ENCODE measurements at regions of chr1 and their contacts with region 1.

Region 1: DNA sequence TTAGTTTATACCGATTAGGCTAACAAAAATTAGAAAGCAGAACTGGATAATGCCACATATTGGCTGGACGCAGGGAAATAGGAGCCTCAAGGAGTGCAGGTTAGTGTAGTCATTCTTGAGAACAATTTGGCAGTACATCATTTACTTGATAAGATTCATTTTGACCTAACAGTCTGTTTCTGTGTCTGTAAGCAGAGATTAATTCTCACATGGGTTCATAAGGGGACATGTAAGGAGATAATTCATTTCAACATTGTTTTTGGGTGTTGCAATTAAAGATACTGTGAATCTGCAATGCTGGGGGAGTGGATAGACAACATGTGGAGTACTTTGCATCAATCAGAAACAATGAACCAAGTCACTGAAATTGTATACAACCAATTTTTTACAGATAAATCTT is 32.0 kb downstream of the AGO3 start:
- DNase-seq: no peak
- ATAC-seq: no peak
- H3K4me3 ChIP-seq: no peak overlapping the region
- H3K27ac ChIP-seq: no peak overlapping the region
- H3K4me1 ChIP-seq: no peaks in the 10 kb centered on the region
- H3K27me3 ChIP-seq: no peaks in the 10 kb centered on the region
- CTCF ChIP-seq: no peak

Region 2: GRCh38 chr1:35715568-35716002 is 247.4 kb before region 1 on chr1:
- intact Hi-C with region 1: no loop called
- DNase-seq: peak; percentile 58 to 63
- ATAC-seq: peak; percentile 30 to 64 (median 53)
- H3K4me3 ChIP-seq: no peak overlapping the region
- H3K27ac ChIP-seq: no peak overlapping the region
- H3K4me1 ChIP-seq: peaks cover 4 to 41% (median 32%) of the 10 kb centered on the region in 9 donors
- H3K27me3 ChIP-seq: no peaks in the 10 kb centered on the region
- CTCF ChIP-seq: peak; percentile 66 to 92 (median 85)

Region 3: GRCh38 chr1:36040238-36040637 is 77.3 kb after region 1 on chr1:
- intact Hi-C with region 1: no loop called
- DNase-seq: no peak
- ATAC-seq: no peak
- H3K4me3 ChIP-seq: no peak overlapping the region
- H3K27ac ChIP-seq: no peak overlapping the region
- H3K4me1 ChIP-seq: peaks cover 0 to 4% (median 0%) of the 10 kb centered on the region in 9 donors
- H3K27me3 ChIP-seq: no peaks in the 10 kb centered on the region
- CTCF ChIP-seq: no peak

Region 4: DNA sequence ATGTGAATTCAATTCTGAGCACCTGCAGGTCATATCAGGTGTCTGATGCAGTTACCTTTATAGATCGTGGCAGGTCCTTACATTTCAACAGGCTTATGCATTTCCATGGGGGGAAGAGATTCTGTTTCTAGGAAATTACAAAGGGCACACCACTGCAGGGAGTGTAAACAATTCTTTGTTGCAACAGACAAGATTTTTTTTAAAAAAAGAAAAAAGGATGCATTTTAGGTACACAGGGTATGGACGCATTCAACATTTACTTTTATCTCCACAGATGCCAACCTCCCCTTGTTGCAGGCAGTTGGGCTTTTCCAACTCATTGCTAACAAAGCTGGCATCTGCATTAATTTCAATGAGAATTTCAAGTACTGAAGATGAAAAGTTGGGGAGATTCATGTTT is 107.4 kb after region 1 on chr1:
- intact Hi-C with region 1: loop called in 1 of 10 experiments (anchors 5 kb)
- DNase-seq: no peak
- ATAC-seq: no peak
- H3K4me3 ChIP-seq: no peak overlapping the region
- H3K27ac ChIP-seq: no peak overlapping the region
- H3K4me1 ChIP-seq: peaks cover 0 to 4% (median 0%) of the 10 kb centered on the region in 9 donors
- H3K27me3 ChIP-seq: no peaks in the 10 kb centered on the region
- CTCF ChIP-seq: no peak

Region 5: DNA sequence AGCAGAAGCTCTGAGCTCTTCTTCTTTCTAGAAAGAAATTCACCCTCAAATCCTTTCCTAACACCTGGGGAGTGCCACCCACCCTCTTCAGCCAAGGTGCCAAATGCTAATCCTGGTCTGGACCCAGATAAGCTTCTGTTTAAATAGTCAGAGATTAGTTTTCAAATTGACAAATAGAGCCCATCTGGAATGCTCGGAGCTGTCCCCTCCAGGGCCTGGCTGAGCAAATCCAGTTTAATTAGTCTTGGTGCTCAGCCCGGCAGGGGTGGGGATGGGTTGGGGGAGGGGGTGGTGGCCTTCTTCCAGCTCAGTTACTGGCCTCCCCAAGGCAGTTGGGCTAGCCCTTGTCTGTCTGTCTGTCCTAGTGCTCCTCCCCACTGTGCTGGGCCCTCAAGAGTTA is 801.8 kb after region 1 on chr1:
- intact Hi-C with region 1: no loop called
- DNase-seq: no peak
- ATAC-seq: no peak
- H3K4me3 ChIP-seq: no peak overlapping the region
- H3K27ac ChIP-seq: no peak overlapping the region
- H3K4me1 ChIP-seq: no peaks in the 10 kb centered on the region
- H3K27me3 ChIP-seq: peaks cover 0 to 48% (median 24%) of the 10 kb centered on the region in 7 donors
- CTCF ChIP-seq: no peak